PC-3 (cell line): ENCODE measurements at regions of chr17 and their contacts with region 1.

Region 1: DNA sequence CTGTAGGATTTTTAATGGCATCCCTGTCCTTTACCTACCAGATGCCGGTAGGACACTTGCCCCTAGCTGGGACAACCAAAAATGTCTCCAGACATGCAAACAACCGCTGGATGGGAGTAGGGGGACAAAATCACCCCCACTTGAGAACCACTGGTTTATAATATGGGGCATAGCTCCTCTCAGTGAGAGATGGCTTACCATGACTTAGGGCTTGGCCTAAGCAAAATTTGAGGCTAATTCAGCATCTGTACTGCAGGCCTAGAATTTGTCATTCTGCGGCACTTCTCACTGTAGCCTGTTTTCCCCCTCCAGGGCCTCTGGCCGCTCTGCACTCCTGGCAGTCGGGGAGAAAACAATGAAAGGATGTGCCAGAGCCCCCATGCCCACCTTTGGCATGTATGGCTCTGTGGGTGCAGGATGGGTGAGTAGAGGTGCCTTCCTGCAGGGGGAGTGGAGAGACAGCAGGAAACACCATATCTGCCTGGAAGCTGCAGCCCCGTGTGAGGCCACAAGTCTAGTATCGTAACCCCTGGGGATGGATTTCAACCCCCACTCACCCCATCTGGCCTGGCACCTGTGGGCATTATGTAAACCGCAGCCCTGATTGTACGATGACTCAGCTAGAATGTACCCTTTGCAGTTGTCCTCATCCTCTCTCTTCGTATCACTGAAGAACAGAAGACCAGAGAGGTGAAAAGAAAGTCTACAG is 268.1 kb downstream of the SOX9 start:
- DNase-seq: peak; percentile 89
- ATAC-seq: peak; percentile 2
- H3K4me3 ChIP-seq: no peak overlapping the region
- H3K27ac ChIP-seq: peak overlapping the region; percentile 97
- H3K4me1 ChIP-seq: peaks cover 84% of the 10 kb centered on the region
- H3K27me3 ChIP-seq: no peaks in the 10 kb centered on the region
- CTCF ChIP-seq: peak; percentile 62

Region 2: GRCh38 chr17:72004611-72005331 is 384.1 kb before region 1 on chr17:
- CTCF ChIA-PET with region 1: no interaction called
- POLR2A ChIA-PET with region 1: no interaction called
- intact Hi-C with region 1: loop called (anchors 10 kb)
- DNase-seq: no peak
- ATAC-seq: no peak
- H3K4me3 ChIP-seq: no peak overlapping the region
- H3K27ac ChIP-seq: peak overlapping the region; percentile 35
- H3K4me1 ChIP-seq: peaks cover 37% of the 10 kb centered on the region
- H3K27me3 ChIP-seq: no peaks in the 10 kb centered on the region
- CTCF ChIP-seq: no peak

Region 3: DNA sequence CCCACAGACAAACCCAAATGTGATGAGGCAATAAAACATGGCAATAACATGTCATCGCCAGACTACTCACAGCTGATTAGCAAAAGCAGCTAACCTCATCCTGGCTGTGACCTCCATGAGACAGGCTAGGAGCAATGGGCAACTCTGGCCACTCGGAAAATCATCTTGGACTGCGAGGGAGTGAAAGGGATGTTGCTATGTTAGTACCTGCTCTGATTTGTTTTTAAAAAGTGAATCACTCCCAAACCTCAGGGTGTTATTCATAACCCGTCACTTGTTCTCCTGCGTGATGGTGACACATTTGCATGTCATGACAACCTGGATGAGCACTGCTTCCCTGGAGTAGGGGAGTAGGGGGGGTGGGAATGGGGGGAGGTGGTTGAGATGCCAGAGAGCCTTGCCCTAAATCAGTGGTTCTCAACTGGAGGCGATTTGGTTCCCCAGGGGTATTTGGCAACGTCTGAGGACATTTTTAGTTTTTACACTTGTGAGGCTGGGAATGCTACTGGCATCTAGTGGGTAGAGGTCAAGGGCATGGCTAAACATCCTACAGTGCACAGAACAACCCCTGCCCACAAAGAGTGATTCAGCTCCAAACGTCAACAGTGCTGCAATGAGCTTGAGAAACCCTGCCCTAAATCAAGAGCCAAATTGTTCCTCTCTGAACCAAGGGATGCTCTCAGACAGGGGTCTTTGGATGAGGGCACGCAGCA is 26.4 kb before region 1 on chr17:
- CTCF ChIA-PET with region 1: no interaction called
- POLR2A ChIA-PET with region 1: no interaction called
- intact Hi-C with region 1: loop called (anchors 1 kb)
- DNase-seq: peak; percentile 97
- ATAC-seq: peak; percentile 85
- H3K4me3 ChIP-seq: 0 out of 2 replicates have a peak overlapping the region, but pooled peaks have one; percentile 1
- H3K27ac ChIP-seq: peak overlapping the region; percentile 93
- H3K4me1 ChIP-seq: peaks cover 47% of the 10 kb centered on the region
- H3K27me3 ChIP-seq: no peaks in the 10 kb centered on the region
- CTCF ChIP-seq: no peak

Region 4: DNA sequence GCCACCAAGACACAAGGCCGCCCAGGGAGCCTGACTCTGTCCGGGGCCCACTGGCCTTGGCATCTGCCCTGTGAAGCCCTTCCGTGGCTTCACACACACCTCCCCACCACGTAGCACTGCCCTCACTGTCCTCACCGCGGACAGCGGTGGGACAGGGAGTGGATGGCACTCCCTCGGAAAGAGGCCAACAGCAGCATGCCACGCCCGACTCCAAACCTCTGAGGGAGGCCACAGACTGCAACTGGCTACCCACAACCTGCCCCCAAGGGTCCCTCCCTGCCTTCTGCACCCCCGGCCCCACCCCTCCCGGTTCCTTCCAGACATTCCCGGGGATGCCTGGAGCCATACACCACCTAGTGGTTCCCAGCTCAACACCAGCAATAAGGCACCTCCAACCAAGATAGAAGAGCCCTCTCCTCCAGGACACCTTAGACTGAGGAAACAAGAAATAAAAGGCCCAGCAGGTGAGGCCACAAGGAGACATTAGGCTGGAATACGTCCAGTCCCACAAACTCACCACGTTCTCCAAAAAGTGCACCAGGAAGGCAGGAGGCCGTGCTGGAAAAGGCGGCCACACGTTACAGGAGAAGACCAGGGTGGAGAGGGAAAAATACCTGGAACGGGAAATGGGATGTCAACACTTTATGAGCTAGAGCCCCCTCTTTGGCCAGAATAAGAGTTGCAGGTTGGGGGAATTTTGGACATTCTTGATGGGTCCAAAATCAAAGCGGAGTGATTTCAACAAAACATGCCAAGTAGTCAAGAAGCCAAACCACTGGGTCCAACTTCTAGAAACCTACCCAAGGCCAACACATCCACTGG is 41.9 kb after region 1 on chr17:
- CTCF ChIA-PET with region 1: no interaction called
- POLR2A ChIA-PET with region 1: no interaction called
- intact Hi-C with region 1: no loop called
- DNase-seq: peak; percentile 25
- ATAC-seq: no peak
- H3K4me3 ChIP-seq: no peak overlapping the region
- H3K27ac ChIP-seq: no peak overlapping the region
- H3K4me1 ChIP-seq: peaks cover 21% of the 10 kb centered on the region; the same call in 1 of the 2 replicates
- H3K27me3 ChIP-seq: no peaks in the 10 kb centered on the region
- CTCF ChIP-seq: peak; percentile 59; the same call in 1 of the 2 replicates

Region 5: DNA sequence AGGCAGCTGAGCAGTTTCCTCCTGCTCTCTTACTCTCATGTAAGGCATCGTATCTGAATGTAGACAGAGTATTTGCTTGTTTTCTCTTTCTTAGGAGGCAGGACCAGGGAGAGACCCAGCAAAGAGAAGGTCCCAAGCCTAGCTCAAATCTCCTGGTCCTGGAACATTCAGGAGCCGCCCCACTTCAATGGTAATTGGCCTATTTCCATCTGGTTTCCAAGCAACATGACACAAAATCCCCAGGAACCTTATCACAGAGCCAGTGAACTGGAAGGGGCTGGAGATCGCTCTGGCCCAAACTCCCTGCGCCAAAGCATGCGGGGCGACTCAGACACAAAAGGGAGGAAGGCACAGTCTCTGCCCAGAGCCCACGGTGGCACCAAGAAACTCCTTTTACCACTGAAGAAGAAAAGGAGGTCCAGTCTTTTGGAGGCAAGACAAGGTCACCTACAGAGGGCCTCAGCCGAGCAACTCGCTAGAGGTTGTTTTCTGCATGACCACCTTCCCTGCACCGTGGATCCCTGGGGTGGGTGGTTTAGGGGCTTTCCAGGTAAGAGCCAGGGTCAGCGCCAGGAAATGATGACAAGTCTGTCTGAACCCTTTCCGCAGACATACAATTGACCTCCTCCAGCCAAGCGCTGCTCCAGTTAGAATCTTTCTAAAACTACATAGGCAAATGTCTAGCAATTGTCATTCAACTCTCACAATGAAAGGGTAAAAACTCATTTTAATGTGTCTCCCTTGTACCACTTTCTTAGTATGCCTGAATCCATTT is 126.6 kb after region 1 on chr17:
- CTCF ChIA-PET with region 1: no interaction called
- POLR2A ChIA-PET with region 1: no interaction called
- intact Hi-C with region 1: no loop called
- DNase-seq: no peak
- ATAC-seq: no peak
- H3K4me3 ChIP-seq: no peak overlapping the region
- H3K27ac ChIP-seq: no peak overlapping the region
- H3K4me1 ChIP-seq: peaks cover 41% of the 10 kb centered on the region
- H3K27me3 ChIP-seq: no peaks in the 10 kb centered on the region
- CTCF ChIP-seq: no peak

Region 6: GRCh38 chr17:72985881-72986720 is 597.2 kb after region 1 on chr17:
- CTCF ChIA-PET with region 1: no interaction called
- POLR2A ChIA-PET with region 1: interaction called, 15 read pairs
- intact Hi-C with region 1: no loop called
- DNase-seq: peak; percentile 88
- ATAC-seq: peak; percentile 57
- H3K4me3 ChIP-seq: no peak overlapping the region
- H3K27ac ChIP-seq: no peak overlapping the region
- H3K4me1 ChIP-seq: peaks cover 25% of the 10 kb centered on the region
- H3K27me3 ChIP-seq: no peaks in the 10 kb centered on the region
- CTCF ChIP-seq: peak; percentile 98

Region 7: DNA sequence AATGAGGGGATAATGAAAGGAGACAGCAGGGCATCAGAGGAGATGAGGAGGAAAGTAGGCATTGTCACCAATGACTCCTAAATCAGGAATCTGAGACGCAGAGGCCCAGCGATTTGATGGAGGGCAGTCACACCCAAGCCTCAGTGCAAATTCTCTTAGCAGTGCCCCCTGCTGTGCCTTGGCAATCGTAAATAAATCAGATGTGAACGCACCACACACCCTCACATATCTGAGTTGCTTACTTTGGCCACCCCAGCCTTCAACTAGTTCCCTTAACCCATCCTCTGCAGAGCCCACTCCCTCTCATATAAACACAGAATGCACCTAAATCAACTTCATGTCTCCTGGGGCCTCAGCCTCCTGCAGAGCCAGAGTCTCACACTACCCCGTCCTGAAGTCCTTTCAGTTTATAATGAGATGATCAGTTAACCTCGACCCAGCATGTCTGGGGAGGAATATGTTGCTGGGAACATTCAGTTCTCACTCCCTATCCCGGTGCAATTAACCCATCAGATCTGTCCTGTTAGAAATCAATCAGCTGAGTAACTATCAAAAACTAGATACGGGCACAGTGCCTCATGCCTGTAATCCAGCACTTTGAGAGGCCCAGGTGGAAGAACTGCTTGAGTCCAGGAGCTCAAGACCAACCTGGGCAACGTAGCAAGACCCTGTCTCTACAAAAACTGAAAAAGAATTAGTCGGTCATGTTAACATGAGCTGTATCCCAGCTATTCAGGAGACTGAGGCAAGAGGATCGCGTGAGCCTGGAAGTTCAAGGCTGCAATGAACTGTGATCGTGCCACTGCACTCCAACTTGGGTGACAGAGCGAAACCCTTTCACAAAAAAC is 625.1 kb after region 1 on chr17:
- CTCF ChIA-PET with region 1: no interaction called
- POLR2A ChIA-PET with region 1: no interaction called
- intact Hi-C with region 1: no loop called
- DNase-seq: peak; percentile 57
- ATAC-seq: peak; percentile 50
- H3K4me3 ChIP-seq: no peak overlapping the region
- H3K27ac ChIP-seq: no peak overlapping the region
- H3K4me1 ChIP-seq: 0 out of 2 replicates have a peak, but pooled peaks cover 3% of the 10 kb centered on the region
- H3K27me3 ChIP-seq: no peaks in the 10 kb centered on the region
- CTCF ChIP-seq: peak; percentile 39